ENCODE measurements at regions of chr1 and their contacts with region 1.

Region 1: DNA sequence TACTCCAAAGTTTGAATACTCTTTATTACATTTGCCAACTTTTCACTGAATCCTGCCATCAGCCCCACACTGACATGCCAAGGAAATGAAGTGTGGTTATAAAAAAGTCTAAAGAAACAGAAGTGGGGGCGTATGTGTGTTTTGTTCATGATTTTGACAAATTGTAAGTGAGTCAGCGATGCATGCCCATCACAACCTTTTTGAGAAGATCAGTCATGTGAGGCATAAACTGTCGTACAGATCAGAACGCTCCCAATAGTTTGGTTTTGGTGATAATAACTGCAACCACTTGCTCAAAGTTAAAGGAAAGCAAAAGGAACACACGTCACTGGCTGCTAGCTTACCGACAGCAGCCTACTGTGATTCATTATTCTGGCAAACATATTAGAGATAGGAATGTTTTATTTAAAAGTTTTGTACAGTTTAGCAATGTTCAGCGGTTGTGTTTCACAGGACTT is 95.6 kb downstream of the RGS2 start:
- DNase-seq: peak; percentile 96
- H3K4me3 Mint-ChIP-seq: peak overlapping the region; percentile 33
- H3K27ac Mint-ChIP-seq: peak overlapping the region; percentile 92
- H3K4me1 Mint-ChIP-seq: peaks cover 66% of the 10 kb centered on the region
- H3K27me3 Mint-ChIP-seq: no peaks in the 10 kb centered on the region
- CTCF ChIP-seq: no peak

Region 2: DNA sequence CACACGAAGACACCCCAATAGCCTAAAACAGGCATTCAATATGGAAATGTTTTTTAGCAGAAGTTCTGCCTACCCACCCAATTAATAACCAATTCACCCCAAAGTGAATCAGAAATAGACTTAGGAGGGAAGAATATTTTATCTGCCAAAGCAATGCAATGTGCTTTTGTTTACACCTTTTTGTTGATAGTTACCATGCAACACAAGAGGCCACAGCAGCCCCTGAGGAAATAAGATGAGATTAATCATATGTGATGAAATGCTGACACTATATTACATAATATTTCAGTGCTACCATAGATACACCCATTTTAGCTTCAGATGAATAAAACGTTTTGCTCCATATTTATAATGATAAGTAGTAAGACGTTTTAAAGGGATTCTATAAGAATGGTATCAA is 156.5 kb before region 1 on chr1:
- CTCF ChIA-PET with region 1: no interaction called
- POLR2A ChIA-PET with region 1: no interaction called
- intact Hi-C with region 1: no loop called
- DNase-seq: peak; percentile 73
- H3K4me3 Mint-ChIP-seq: no peak overlapping the region
- H3K27ac Mint-ChIP-seq: peak overlapping the region; percentile 70
- H3K4me1 Mint-ChIP-seq: peaks cover 5% of the 10 kb centered on the region
- H3K27me3 Mint-ChIP-seq: no peaks in the 10 kb centered on the region
- CTCF ChIP-seq: no peak

Region 3: GRCh38 chr1:192832492-192832891 is 72.0 kb before region 1 on chr1:
- CTCF ChIA-PET with region 1: interaction called, 3 read pairs
- POLR2A ChIA-PET with region 1: interaction called, 24 read pairs
- intact Hi-C with region 1: loop called (anchors 5 kb)
- DNase-seq: no peak
- H3K4me3 Mint-ChIP-seq: no peak overlapping the region
- H3K27ac Mint-ChIP-seq: no peak overlapping the region
- H3K4me1 Mint-ChIP-seq: peaks cover 30% of the 10 kb centered on the region
- H3K27me3 Mint-ChIP-seq: no peaks in the 10 kb centered on the region
- CTCF ChIP-seq: no peak

Region 4: GRCh38 chr1:192892934-192893333 is 11.5 kb before region 1 on chr1:
- CTCF ChIA-PET with region 1: interaction called, 4 read pairs
- POLR2A ChIA-PET with region 1: interaction called, 10 read pairs
- intact Hi-C with region 1: no loop called
- DNase-seq: peak; percentile 13
- H3K4me3 Mint-ChIP-seq: no peak overlapping the region
- H3K27ac Mint-ChIP-seq: peak overlapping the region; percentile 63
- H3K4me1 Mint-ChIP-seq: peaks cover 14% of the 10 kb centered on the region
- H3K27me3 Mint-ChIP-seq: no peaks in the 10 kb centered on the region
- CTCF ChIP-seq: no peak

Region 5: GRCh38 chr1:192941722-192942411 is 37.4 kb after region 1 on chr1:
- CTCF ChIA-PET with region 1: no interaction called
- POLR2A ChIA-PET with region 1: interaction called, 10 read pairs
- intact Hi-C with region 1: no loop called
- DNase-seq: no peak
- H3K4me3 Mint-ChIP-seq: no peak overlapping the region
- H3K27ac Mint-ChIP-seq: no peak overlapping the region
- H3K4me1 Mint-ChIP-seq: peaks cover 5% of the 10 kb centered on the region
- H3K27me3 Mint-ChIP-seq: no peaks in the 10 kb centered on the region
- CTCF ChIP-seq: no peak

Region 6: DNA sequence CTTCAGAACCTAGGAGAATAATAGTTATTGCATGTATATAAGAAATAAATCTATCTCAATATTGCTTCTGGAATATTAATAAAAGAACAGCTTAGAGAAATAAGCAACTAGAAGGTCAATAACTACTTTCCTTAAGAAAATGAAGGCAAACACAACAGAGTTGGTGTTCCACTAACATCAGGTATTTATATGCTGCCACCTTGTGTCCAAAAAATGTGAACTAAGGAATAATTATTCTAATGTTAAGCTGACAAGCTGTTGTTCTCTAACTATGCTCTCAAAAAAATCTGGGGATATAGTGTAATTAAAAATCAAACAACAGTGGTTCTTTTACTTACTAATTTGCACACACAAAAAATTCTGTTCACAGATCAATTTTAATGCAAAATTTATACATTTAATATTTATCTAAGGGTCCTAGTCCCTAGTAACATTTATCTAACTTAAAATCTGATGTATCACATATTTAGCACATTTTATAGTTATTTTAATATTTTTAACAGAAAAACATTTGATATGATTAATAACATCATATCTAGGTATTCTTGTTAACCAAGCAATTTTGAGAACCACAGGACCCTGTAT is 115.1 kb after region 1 on chr1:
- CTCF ChIA-PET with region 1: interaction called, 4 read pairs
- POLR2A ChIA-PET with region 1: interaction called, 17 read pairs
- intact Hi-C with region 1: loop called (anchors 5 kb)
- DNase-seq: peak; percentile 76
- H3K4me3 Mint-ChIP-seq: no peak overlapping the region
- H3K27ac Mint-ChIP-seq: peak overlapping the region; percentile 31
- H3K4me1 Mint-ChIP-seq: no peaks in the 10 kb centered on the region
- H3K27me3 Mint-ChIP-seq: no peaks in the 10 kb centered on the region
- CTCF ChIP-seq: peak; percentile 59

Region 7: DNA sequence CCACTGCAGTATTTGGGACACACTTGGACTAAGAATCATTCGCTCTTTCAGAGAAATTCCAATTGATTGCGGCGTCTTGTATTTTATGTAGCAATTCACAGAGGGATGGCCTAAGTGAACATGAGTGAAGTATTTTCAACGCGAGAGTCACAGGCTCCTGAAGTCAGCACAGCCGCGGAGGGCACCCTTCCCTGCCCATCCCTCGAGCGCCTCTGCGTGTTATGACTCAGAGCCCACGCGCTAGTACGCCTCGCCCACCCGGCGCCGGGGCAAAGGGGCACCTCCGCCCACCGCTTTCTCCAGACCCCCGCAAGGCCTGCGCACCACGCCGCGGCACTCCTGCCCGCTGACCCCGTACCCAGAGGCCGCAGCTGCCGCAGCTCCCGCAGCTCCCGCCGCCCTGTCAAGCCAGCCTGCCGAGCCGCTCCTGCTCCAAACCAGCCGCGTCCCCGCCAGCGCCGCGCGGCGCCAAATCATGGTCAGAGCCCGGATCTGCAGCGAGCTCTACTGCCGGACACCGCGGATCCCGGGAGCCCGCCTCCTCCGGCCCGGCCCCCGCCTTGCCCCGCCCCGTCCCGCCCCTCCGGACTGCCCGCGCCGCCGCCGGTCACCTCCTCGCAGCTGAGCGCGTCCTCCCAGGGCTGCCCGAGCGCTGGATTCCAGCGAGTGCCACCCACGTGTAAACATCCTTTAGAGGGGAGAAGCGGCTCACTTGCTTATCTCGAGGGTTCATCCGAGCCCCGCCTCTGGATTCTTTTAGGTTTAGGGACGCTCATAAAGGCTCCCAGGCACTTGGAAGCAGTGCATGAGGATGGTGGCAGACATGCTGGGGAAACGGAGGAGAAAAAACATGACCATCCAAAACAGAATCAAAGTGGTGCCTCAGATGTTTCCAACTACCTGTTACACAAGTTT is 200.7 kb after region 1 on chr1 and contains the start of gene GLRX2:
- CTCF ChIA-PET with region 1: no interaction called
- POLR2A ChIA-PET with region 1: interaction called, 10 read pairs
- intact Hi-C with region 1: no loop called
- DNase-seq: peak; percentile 90
- H3K4me3 Mint-ChIP-seq: peak within 1 kb of the TSS; percentile 91
- H3K27ac Mint-ChIP-seq: peak within 1 kb of the TSS; percentile 89
- H3K4me1 Mint-ChIP-seq: peaks cover 20% of the 10 kb centered on the region
- H3K27me3 Mint-ChIP-seq: no peaks in the 10 kb centered on the region
- CTCF ChIP-seq: no peak
- total RNA-seq, gene GLRX2: 59.8 and 74.2 TPM in 2 replicates